H1 (cell line): ENCODE measurements at regions of chr19 and their contacts with region 1.

Region 1: DNA sequence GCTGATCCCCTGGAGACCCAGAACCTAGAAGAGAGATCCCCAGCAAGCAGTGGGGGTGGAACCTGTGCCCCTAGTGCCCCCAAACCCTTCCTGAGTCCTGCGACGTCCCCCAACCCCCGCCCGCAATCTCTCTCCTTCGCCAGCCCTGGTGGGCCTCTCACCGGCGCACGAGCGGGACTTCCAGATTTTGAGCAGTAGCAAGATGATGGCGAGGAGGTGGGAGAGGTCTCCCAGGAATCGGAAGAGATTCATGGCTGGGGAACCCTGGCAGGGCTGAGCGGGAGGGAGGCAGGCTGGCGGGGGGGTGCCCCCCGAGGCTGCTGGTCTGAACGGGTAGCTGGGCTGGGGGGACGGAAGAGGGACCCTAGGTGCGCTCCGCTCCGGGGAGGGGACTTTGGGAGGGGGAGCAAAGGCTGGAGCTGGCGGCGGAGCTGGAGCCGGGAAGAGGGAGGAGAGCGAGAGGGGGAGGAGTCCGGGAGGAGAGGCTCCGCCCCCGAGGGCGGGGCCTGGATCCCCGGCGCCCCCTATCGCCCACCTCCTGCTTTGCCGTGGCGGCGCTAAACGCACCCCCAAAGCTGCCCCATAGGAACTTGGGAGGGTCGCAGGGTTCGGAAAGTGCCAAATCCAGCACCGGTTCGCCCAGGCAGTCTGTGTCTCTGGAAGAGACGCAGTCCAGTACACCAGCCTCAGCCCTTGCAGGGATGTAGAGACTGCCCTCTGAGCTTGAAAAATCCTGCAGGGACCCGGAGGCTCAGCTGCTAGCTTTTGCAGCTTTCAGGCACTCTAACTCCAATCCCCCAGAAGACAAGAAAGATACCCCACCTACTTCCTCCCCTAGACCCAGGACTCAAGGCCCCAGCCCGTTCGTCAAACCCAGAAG is at the start of gene KDELR1:
- DNase-seq: peak in 1 of 2 experiments; percentile 97
- H3K4me3 ChIP-seq: peak within 1 kb of the TSS; percentile 81 to 96 (median 90)
- H3K27ac ChIP-seq: peak within 1 kb of the TSS; percentile 72; the same call in 1 of the 2 replicates
- H3K4me1 ChIP-seq: peaks cover 0 to 35% (median 21%) of the 10 kb centered on the region in 4 experiments; a peak in 6 of 7 replicates
- H3K27me3 ChIP-seq: peaks cover 6 to 35% (median 29%) of the 10 kb centered on the region in 4 experiments
- CTCF ChIP-seq: peak; percentile 84 to 93 (median 84)
- EP300 ChIP-seq: no peak
- POLR2A ChIP-seq: no peak
- RAD21 ChIP-seq: peak; percentile 28 to 45; a peak in 3 of 4 replicates
- total RNA-seq, gene KDELR1: 224 and 225 TPM in 2 replicates

Region 2: DNA sequence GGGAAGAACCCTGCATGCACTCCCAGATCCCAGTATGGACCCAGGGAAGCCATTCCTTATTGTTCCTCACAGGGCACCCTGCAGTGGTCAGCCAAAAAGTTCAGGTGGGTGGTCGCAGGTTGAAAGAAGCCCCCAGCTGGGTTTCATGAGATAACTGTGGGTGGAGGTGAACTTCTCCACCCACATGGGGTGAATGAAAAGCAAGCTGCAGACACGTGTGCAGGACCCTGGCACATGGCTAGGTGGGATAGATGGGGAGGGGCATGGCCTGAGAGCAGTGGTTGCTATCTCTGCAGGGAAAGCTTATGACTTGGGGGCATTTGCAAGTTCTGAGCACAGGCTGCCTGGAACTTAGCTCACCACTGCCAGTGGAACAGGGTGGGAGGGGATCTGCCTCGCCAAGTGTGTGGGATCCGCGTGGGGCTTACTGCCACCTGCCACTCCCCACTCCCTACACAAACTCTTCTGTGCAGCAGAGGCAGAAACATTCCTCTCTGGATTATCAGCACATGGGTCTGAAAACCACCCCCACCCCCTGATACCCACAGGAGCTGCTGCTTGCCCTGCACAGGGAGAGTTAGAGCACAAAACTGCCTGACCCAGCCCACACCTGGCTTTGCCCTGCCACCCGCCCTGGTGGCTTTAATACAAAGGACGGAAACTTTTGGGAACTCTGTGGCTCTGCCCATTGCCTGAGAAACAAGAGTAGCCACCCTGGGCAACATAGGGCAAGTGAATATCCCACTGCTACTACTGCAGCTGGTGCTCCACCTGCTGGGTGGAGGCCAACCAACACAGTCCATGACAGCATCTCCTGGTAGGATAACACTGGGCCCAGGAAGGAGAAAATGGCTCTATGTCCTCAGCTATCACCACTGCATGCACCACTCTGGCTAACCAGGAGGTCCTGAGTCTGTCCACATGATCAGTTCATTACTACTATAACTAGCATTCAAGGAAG is 305.2 kb before region 1 on chr19:
- CTCF ChIA-PET with region 1: no interaction called
- POLR2A ChIA-PET with region 1: no interaction called
- DNase-seq: peak in 1 of 2 experiments; percentile 67
- H3K4me3 ChIP-seq: no peak overlapping the region
- H3K27ac ChIP-seq: no peak overlapping the region
- H3K4me1 ChIP-seq: no peaks in the 10 kb centered on the region; a peak in 1 of 7 replicates
- H3K27me3 ChIP-seq: no peaks in the 10 kb centered on the region; a peak in 2 of 7 replicates
- CTCF ChIP-seq: peak; percentile 68 to 78 (median 73)
- EP300 ChIP-seq: no peak
- POLR2A ChIP-seq: 0 out of 3 replicates have a peak, but pooled peaks of 1 of the 2 experiments have one; percentile 23
- RAD21 ChIP-seq: peak; percentile 55 to 71

Region 3: GRCh38 chr19:48321622-48322591 is 69.4 kb before region 1 on chr19:
- CTCF ChIA-PET with region 1: interaction called, 11 read pairs
- POLR2A ChIA-PET with region 1: interaction called, 4 read pairs
- DNase-seq: peak; percentile 86 to 98
- H3K4me3 ChIP-seq: peak overlapping the region; percentile 49 to 81 (median 64)
- H3K27ac ChIP-seq: peak overlapping the region; percentile 92
- H3K4me1 ChIP-seq: peaks cover 0 to 20% (median 10%) of the 10 kb centered on the region in 4 experiments; a peak in 6 of 7 replicates
- H3K27me3 ChIP-seq: peaks cover 0 to 5% (median 2%) of the 10 kb centered on the region in 4 experiments; a peak in 1 of 7 replicates
- CTCF ChIP-seq: peak in 2 of 3 experiments; percentile 4 to 16; a peak in 1 of 4 replicates
- EP300 ChIP-seq: no peak
- POLR2A ChIP-seq: peak; percentile 66 to 92
- RAD21 ChIP-seq: no peak

Region 4: GRCh38 chr19:48372904-48373303 is 18.4 kb before region 1 on chr19:
- CTCF ChIA-PET with region 1: interaction called, 14 read pairs
- POLR2A ChIA-PET with region 1: interaction called, 5 read pairs
- DNase-seq: no peak
- H3K4me3 ChIP-seq: no peak overlapping the region
- H3K27ac ChIP-seq: no peak overlapping the region
- H3K4me1 ChIP-seq: no peaks in the 10 kb centered on the region; a peak in 1 of 7 replicates
- H3K27me3 ChIP-seq: peaks cover 0 to 2% (median 0%) of the 10 kb centered on the region in 4 experiments; a peak in 1 of 7 replicates
- CTCF ChIP-seq: no peak
- EP300 ChIP-seq: no peak
- POLR2A ChIP-seq: no peak
- RAD21 ChIP-seq: no peak

Region 5: GRCh38 chr19:48403606-48404005 is 12.3 kb after region 1 on chr19:
- CTCF ChIA-PET with region 1: interaction called, 12 read pairs
- POLR2A ChIA-PET with region 1: interaction called, 18 read pairs
- DNase-seq: peak in 1 of 2 experiments; percentile 61
- H3K4me3 ChIP-seq: no peak overlapping the region
- H3K27ac ChIP-seq: no peak overlapping the region
- H3K4me1 ChIP-seq: peaks cover 11 to 16% (median 12%) of the 10 kb centered on the region in 4 experiments; a peak in 6 of 7 replicates
- H3K27me3 ChIP-seq: no peaks in the 10 kb centered on the region
- CTCF ChIP-seq: no peak
- EP300 ChIP-seq: no peak
- POLR2A ChIP-seq: no peak
- RAD21 ChIP-seq: no peak

Region 6: DNA sequence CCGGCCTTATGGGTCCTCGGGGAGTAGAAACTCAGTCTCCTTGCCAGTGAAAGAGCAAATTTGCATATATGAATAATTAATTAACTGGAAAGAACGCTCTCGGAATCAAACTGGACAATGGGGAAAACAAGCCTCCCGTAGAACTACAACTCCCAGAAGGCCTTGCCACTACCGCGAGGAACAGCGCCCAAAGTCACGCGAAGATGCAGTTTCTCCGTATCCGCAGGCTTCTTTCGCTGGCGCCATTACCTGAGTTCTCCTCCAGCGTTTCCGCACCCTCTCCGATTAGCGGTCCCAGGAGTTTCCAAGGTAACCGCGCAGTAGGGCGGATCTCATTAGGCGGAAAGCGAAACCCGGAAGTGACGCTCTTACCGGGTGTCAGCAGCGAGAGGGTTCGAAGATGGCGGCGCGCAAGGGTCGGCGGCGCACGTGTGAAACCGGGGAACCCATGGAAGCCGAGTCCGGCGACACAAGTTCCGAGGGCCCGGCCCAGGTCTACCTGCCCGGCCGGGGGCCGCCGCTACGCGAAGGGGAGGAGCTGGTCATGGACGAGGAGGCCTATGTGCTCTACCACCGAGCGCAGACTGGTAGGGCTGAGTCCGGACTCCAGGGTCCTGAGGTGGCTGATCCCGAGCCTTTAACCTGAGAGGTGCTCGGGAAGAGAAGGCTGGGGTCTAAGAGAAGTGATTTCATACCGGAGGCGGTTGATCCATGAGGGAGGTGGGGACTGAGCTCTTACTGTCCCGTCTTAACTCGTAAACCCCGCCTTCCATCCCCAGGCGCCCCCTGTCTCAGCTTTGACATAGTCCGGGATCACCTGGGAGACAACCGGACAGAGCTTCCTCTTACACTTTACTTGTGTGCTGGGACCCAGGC is 54.5 kb after region 1 on chr19 and contains the start of gene GRWD1:
- CTCF ChIA-PET with region 1: interaction called, 8 read pairs
- POLR2A ChIA-PET with region 1: interaction called, 12 read pairs
- DNase-seq: peak; percentile 90 to 91
- H3K4me3 ChIP-seq: peak within 1 kb of the TSS; percentile 80 to 99 (median 95)
- H3K27ac ChIP-seq: peak within 1 kb of the TSS; percentile 62
- H3K4me1 ChIP-seq: peaks cover 0 to 5% (median 4%) of the 10 kb centered on the region in 4 experiments; a peak in 4 of 7 replicates
- H3K27me3 ChIP-seq: no peaks in the 10 kb centered on the region
- CTCF ChIP-seq: no peak
- EP300 ChIP-seq: no peak
- POLR2A ChIP-seq: peak; percentile 47 to 94
- RAD21 ChIP-seq: 0 out of 4 replicates have a peak, but pooled peaks of 1 of the 2 experiments have one; percentile 0
- total RNA-seq, gene GRWD1: 61.9 and 64.9 TPM in 2 replicates

Region 7: DNA sequence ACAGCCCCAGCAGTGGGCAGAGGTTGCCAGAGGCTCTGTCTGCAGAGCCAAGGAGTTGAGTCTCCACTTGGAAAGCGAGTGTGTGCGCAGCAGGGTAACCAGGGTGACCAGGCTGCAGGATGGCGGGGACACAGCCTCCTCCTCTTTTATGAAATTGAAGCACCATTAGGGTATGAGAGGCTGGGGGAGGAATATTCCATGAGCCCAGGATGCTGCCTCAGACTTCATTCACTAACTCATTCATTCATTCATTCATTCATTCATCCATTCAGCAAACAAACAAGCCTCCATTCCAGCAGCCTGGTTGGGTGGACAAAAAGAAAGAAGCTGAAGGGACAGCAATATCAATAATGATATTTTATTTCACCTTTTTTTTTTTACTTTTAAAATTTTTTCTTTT is 126.9 kb after region 1 on chr19:
- CTCF ChIA-PET with region 1: no interaction called
- POLR2A ChIA-PET with region 1: no interaction called
- DNase-seq: no peak
- H3K4me3 ChIP-seq: no peak overlapping the region
- H3K27ac ChIP-seq: no peak overlapping the region
- H3K4me1 ChIP-seq: peaks cover 0 to 7% (median 4%) of the 10 kb centered on the region in 4 experiments; a peak in 5 of 7 replicates
- H3K27me3 ChIP-seq: no peaks in the 10 kb centered on the region; a peak in 1 of 7 replicates
- CTCF ChIP-seq: no peak
- EP300 ChIP-seq: no peak
- POLR2A ChIP-seq: no peak
- RAD21 ChIP-seq: no peak

Region 8: GRCh38 chr19:48705431-48705830 is 314.1 kb after region 1 on chr19:
- CTCF ChIA-PET with region 1: no interaction called
- POLR2A ChIA-PET with region 1: no interaction called
- DNase-seq: no peak
- H3K4me3 ChIP-seq: no peak overlapping the region
- H3K27ac ChIP-seq: no peak overlapping the region
- H3K4me1 ChIP-seq: peaks cover 0 to 3% (median 0%) of the 10 kb centered on the region in 4 experiments; a peak in 1 of 7 replicates
- H3K27me3 ChIP-seq: no peaks in the 10 kb centered on the region
- CTCF ChIP-seq: no peak
- EP300 ChIP-seq: no peak
- POLR2A ChIP-seq: no peak
- RAD21 ChIP-seq: no peak